Common myeloid progenitor, CD34-positive (primary cell): ENCODE measurements at regions of chr11 and their contacts with region 1.

Region 1: DNA sequence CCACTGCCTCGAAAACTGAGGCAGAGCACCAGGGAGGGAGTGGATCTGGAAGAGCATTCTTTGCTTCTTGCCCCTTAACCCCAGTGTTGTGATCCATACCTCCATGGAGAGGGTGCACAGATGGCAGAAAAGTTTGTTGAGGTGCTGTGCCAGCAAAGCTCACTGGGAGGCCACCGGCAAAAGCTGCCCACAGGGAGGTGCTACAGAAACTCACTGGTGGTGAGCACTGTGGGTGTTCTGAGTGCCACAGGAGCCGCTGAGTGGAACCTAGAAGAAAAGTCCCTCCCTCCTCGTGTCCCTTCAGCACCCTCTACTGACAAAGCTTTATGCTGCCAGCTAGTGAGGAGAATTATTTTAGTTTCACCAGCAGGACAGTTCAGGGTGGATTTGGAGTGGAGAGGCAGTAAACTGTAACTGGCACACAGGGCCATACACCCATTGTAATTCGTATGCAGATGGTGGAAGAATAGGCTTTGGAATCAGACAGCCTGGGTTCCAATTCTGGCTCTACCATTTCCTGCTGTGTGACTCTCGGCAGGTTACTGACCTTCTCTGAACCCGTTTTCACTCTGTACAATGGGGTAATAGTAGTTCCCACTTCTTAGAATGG is 84.6 kb downstream of the SWAP70 start:
- DNase-seq: peak; percentile 85 to 92 (median 91)
- H3K4me3 ChIP-seq: no peak overlapping the region
- H3K27ac ChIP-seq: no peak overlapping the region
- H3K4me1 ChIP-seq: peaks cover 3 to 57% (median 21%) of the 10 kb centered on the region in 4 experiments
- H3K27me3 ChIP-seq: no peaks in the 10 kb centered on the region

Region 2: DNA sequence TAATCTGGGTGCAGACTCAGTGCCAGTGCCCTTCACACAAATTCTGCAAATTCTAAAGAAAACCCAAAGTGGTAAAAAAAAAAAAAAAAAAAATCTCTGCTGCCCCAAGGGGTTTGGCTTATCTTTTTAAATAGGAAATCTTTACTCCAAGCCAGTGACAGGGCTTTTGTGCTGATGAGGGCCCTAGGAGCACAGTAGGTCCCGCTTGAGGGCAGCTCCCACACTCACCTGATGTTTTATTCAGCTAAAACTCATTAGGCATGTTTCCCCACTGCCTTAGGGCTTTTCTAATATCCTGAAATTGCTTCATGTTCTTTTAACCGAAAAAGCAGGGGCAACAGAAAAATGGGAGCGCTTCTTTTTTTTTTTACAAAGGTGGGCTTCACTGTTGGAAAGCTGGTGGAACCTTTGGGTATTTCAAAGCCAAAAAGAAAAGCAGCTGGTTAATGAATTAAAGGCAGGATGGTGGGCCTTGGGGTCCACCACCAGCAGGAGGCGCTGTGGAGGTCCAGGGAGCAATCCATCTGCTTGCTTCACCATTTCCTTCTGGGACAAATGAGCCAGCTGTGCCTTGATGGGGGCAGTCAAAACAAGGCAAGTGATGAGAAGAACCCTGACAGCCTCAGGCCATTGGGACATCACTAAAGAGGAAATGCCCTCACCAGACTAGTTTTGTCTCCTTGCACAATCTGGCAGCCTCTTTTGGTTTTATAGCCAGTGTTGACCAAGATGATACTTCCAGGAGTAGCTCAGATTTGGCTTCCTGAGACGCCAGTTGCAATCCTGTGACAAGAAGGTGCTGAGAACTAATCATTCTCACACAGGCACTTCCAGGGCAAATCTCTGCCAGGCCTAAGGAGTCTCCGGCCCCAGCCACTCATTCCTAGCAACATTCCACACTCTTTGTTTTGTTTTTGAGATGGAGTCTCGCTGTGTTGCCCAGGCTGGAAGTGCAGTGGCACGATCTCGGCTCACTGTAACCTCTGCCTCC is 213.4 kb before region 1 on chr11:
- CTCF ChIA-PET with region 1: interaction called, 36 read pairs
- POLR2A ChIA-PET with region 1: no interaction called
- DNase-seq: peak; percentile 65 to 81 (median 73)
- H3K4me3 ChIP-seq: no peak overlapping the region
- H3K27ac ChIP-seq: no peak overlapping the region
- H3K4me1 ChIP-seq: no peaks in the 10 kb centered on the region
- H3K27me3 ChIP-seq: no peaks in the 10 kb centered on the region

Region 3: GRCh38 chr11:9613118-9613829 is 135.2 kb before region 1 on chr11:
- CTCF ChIA-PET with region 1: interaction called, 80 read pairs
- POLR2A ChIA-PET with region 1: interaction called, 6 read pairs
- DNase-seq: peak; percentile 86 to 89 (median 89)
- H3K4me3 ChIP-seq: peak overlapping the region; percentile 42 to 82 (median 69)
- H3K27ac ChIP-seq: peak overlapping the region; percentile 64 to 86
- H3K4me1 ChIP-seq: peaks cover 14 to 38% (median 28%) of the 10 kb centered on the region in 4 experiments
- H3K27me3 ChIP-seq: no peaks in the 10 kb centered on the region

Region 4: GRCh38 chr11:9639985-9640384 is 108.5 kb before region 1 on chr11:
- CTCF ChIA-PET with region 1: interaction called, 12 read pairs
- POLR2A ChIA-PET with region 1: no interaction called
- DNase-seq: peak; percentile 78 to 92 (median 88)
- H3K4me3 ChIP-seq: no peak overlapping the region
- H3K27ac ChIP-seq: no peak overlapping the region
- H3K4me1 ChIP-seq: peaks cover 4 to 48% (median 14%) of the 10 kb centered on the region in 4 experiments
- H3K27me3 ChIP-seq: no peaks in the 10 kb centered on the region

Region 5: GRCh38 chr11:9708544-9708943 is 39.9 kb before region 1 on chr11:
- CTCF ChIA-PET with region 1: interaction called, 33 read pairs
- POLR2A ChIA-PET with region 1: no interaction called
- DNase-seq: peak; percentile 63 to 93 (median 85)
- H3K4me3 ChIP-seq: no peak overlapping the region
- H3K27ac ChIP-seq: no peak overlapping the region
- H3K4me1 ChIP-seq: peaks cover 4 to 52% (median 34%) of the 10 kb centered on the region in 4 experiments
- H3K27me3 ChIP-seq: no peaks in the 10 kb centered on the region

Region 6: DNA sequence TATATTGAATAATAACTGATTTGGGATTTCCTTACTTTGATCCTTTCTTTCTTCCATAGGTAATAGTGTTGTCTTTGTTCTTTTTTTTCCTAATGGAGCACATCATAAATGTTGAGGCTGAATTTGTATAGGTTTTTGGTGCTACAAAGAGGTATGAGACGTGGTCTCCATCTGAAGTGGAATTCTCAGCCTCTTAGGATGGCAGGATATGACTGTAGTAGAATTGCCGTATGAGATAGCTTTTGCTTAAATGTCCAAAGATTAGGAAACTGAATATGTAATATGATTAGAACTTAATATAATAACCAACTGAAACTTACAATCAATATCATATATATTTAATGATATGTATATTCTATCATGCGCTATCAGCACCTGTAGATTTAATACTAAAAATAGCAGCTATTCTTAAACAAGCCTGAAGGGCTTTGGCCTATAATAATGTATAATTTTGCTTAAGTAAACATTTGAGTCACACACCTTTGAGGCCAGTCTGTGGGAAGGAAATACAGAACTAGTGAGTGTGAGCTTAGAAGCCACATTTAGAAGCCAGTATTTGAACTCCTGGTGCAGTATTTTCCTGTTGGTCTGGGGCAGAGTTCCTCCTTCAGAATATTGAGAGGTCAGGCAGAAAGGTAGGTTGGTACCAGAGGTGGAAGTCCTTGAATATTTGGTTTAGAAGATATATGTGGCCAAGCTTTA is 22.0 kb before region 1 on chr11:
- CTCF ChIA-PET with region 1: interaction called, 30 read pairs
- POLR2A ChIA-PET with region 1: no interaction called
- DNase-seq: peak in 2 of 3 donors; percentile 65 to 75
- H3K4me3 ChIP-seq: no peak overlapping the region
- H3K27ac ChIP-seq: peak overlapping the region in 1 of 2 experiments; percentile 33
- H3K4me1 ChIP-seq: peaks cover 10 to 38% (median 19%) of the 10 kb centered on the region in 4 experiments
- H3K27me3 ChIP-seq: no peaks in the 10 kb centered on the region

Region 7: DNA sequence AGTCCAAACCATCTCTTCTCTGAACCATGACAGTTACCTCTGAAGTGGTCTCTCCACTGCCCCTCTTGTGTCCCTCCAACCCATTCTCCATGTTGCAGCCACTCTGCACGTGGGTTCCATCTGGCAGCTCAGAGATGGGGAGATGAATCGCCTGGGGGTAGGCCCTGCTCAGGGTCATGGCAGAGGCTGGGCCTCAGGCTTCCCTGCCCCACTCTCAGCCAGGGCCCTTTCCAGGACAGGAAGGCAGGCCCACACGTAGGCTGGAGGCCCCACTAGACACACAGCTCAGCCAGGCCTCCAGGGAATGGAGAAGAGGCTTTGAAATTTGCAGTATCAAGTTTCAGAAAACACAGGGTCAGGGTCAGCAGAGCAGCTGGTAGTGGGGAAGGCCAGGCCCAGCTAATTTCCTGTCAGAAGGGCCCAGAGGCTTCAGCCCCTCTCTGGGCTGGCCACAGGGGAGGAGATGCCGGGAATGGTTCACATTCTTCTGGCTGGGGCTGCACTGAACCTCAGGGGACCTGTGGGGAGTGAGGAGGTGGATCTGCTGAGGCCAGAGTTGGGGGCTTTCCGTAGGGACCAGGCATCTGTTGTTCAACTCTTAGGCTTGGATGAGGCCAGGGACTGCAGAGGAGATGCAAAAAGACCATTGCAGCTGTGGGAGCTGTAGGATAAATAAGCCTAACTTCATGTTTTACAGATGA is 17.0 kb after region 1 on chr11:
- CTCF ChIA-PET with region 1: interaction called, 11 read pairs
- POLR2A ChIA-PET with region 1: no interaction called
- DNase-seq: no peak
- H3K4me3 ChIP-seq: no peak overlapping the region
- H3K27ac ChIP-seq: no peak overlapping the region
- H3K4me1 ChIP-seq: peaks cover 0 to under 1% (median 0%) of the 10 kb centered on the region in 4 experiments
- H3K27me3 ChIP-seq: no peaks in the 10 kb centered on the region